GM12878 (cell line): ENCODE measurements at regions of chr18 and their contacts with region 1.

Region 1: GRCh38 chr18:50356036-50356945 is 18.6 kb upstream of the SKA1 start:
- DNase-seq: peak; percentile 79
- ATAC-seq: peak; percentile 93
- H3K4me3 ChIP-seq: no peak overlapping the region
- H3K27ac ChIP-seq: peak overlapping the region; percentile 86
- H3K4me1 ChIP-seq: peaks cover 15% of the 10 kb centered on the region
- H3K27me3 ChIP-seq: no peaks in the 10 kb centered on the region; a peak in 1 of 4 replicates
- CTCF ChIP-seq: peak; percentile 18 to 50 (median 41); a peak in 5 of 6 replicates
- EP300 ChIP-seq: peak; percentile 21 to 39; a peak in 2 of 4 replicates
- POLR2A ChIP-seq: no peak
- RAD21 ChIP-seq: peak; percentile 50

Region 2: GRCh38 chr18:50111265-50111792 is 245.0 kb before region 1 on chr18:
- CTCF ChIA-PET with region 1: interaction called, 9 read pairs
- POLR2A ChIA-PET with region 1: no interaction called
- RAD21 ChIA-PET with region 1: interaction called, 4 read pairs
- SMC1A ChIA-PET with region 1: interaction called, 4 read pairs
- in situ Hi-C with region 1: loop called (anchors 10 kb)
- intact Hi-C with region 1: no loop called
- DNase-seq: no peak
- ATAC-seq: peak; percentile 52; the same call in 2 of the 3 replicates
- H3K4me3 ChIP-seq: no peak overlapping the region
- H3K27ac ChIP-seq: no peak overlapping the region
- H3K4me1 ChIP-seq: no peaks in the 10 kb centered on the region
- H3K27me3 ChIP-seq: peaks cover 0 to 12% of the 10 kb centered on the region in 2 experiments; a peak in 2 of 4 replicates
- CTCF ChIP-seq: peak; percentile 7 to 52 (median 21); a peak in 4 of 6 replicates
- EP300 ChIP-seq: no peak
- POLR2A ChIP-seq: no peak
- RAD21 ChIP-seq: peak; percentile 63

Region 3: GRCh38 chr18:50218432-50219197 is 137.7 kb before region 1 on chr18:
- CTCF ChIA-PET with region 1: interaction called, 226 read pairs
- POLR2A ChIA-PET with region 1: interaction called, 8 read pairs
- RAD21 ChIA-PET with region 1: interaction called, 95 read pairs
- SMC1A ChIA-PET with region 1: interaction called, 130 read pairs
- in situ Hi-C with region 1: loop called (anchors 5 kb)
- intact Hi-C with region 1: loop called (anchors 1 kb)
- DNase-seq: peak; percentile 21
- ATAC-seq: peak; percentile 98
- H3K4me3 ChIP-seq: no peak overlapping the region
- H3K27ac ChIP-seq: no peak overlapping the region
- H3K4me1 ChIP-seq: peaks cover 5% of the 10 kb centered on the region
- H3K27me3 ChIP-seq: no peaks in the 10 kb centered on the region; a peak in 1 of 4 replicates
- CTCF ChIP-seq: peak; percentile 47 to 63 (median 50); a peak in 4 of 6 replicates
- EP300 ChIP-seq: no peak
- POLR2A ChIP-seq: no peak
- RAD21 ChIP-seq: peak; percentile 69

Region 4: GRCh38 chr18:50287441-50288347 is 68.6 kb before region 1 on chr18 and contains the start of gene CXXC1:
- CTCF ChIA-PET with region 1: interaction called, 39 read pairs
- POLR2A ChIA-PET with region 1: interaction called, 11 read pairs
- RAD21 ChIA-PET with region 1: interaction called, 49 read pairs
- SMC1A ChIA-PET with region 1: interaction called, 50 read pairs
- in situ Hi-C with region 1: loop called (anchors 10 kb)
- intact Hi-C with region 1: loop called (anchors 1 kb)
- DNase-seq: peak; percentile 99
- ATAC-seq: peak; percentile 97
- H3K4me3 ChIP-seq: peak within 1 kb of the TSS; percentile 97
- H3K27ac ChIP-seq: peak within 1 kb of the TSS; percentile 73
- H3K4me1 ChIP-seq: peaks cover 9% of the 10 kb centered on the region
- H3K27me3 ChIP-seq: no peaks in the 10 kb centered on the region
- CTCF ChIP-seq: peak; percentile 50 to 64 (median 51)
- EP300 ChIP-seq: no peak
- POLR2A ChIP-seq: no peak
- RAD21 ChIP-seq: peak; percentile 44; the same call in 1 of the 2 replicates
- polyA plus RNA-seq, gene CXXC1: 9.2 to 17.0 TPM

Region 5: GRCh38 chr18:50320719-50321118 is 35.6 kb before region 1 on chr18:
- CTCF ChIA-PET with region 1: interaction called, 83 read pairs
- POLR2A ChIA-PET with region 1: interaction called, 32 read pairs
- RAD21 ChIA-PET with region 1: interaction called, 125 read pairs
- SMC1A ChIA-PET with region 1: interaction called, 145 read pairs
- in situ Hi-C with region 1: no loop called
- intact Hi-C with region 1: loop called (anchors 1 kb)
- DNase-seq: peak; percentile 58
- ATAC-seq: peak; percentile 86
- H3K4me3 ChIP-seq: no peak overlapping the region
- H3K27ac ChIP-seq: peak overlapping the region; percentile 78
- H3K4me1 ChIP-seq: peaks cover 27% of the 10 kb centered on the region
- H3K27me3 ChIP-seq: no peaks in the 10 kb centered on the region
- CTCF ChIP-seq: no peak
- EP300 ChIP-seq: peak in 1 of 2 experiments; percentile 61; a peak in 1 of 4 replicates
- POLR2A ChIP-seq: no peak
- RAD21 ChIP-seq: no peak

Region 6: DNA sequence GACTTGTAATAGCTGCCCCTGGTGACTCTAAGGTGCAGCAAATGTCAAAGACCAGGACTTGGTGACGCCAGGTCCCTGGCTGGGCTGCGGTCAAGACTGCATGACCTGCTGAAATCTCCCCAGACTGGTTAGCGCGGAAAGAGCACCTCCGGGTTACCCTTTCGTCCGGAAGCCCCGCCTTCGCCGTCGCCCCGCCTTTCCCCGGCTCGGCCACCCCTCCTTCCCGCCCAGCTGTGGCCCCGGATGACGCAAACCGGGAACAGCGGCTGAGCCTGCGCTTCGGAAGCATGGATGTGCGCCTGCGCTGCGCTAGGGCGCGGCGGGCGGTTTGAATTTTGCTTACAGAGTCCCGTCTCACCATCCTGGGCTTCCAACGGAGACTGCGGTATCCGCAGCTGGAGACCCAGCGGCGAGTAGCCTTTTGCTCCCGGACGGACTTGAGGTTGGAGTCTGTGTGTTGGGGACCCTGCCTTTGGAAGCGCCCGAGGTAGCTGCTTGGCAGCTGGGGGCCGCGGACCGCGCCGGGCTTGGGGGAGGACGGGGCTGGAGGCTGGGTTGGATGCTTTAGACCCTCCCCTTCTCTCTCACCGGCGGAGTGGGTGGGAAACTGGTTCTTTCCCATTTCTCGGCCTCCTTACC is 18.6 kb after region 1 on chr18 and contains the start of gene SKA1:
- CTCF ChIA-PET with region 1: interaction called, 33 read pairs
- POLR2A ChIA-PET with region 1: interaction called, 4 read pairs
- RAD21 ChIA-PET with region 1: interaction called, 12 read pairs
- SMC1A ChIA-PET with region 1: interaction called, 35 read pairs
- in situ Hi-C with region 1: no loop called
- intact Hi-C with region 1: no loop called
- DNase-seq: peak; percentile 77
- ATAC-seq: peak; percentile 98
- H3K4me3 ChIP-seq: peak within 1 kb of the TSS; percentile 93
- H3K27ac ChIP-seq: peak within 1 kb of the TSS; percentile 82
- H3K4me1 ChIP-seq: peaks cover 7% of the 10 kb centered on the region
- H3K27me3 ChIP-seq: no peaks in the 10 kb centered on the region
- CTCF ChIP-seq: no peak
- EP300 ChIP-seq: peak in 1 of 2 experiments; percentile 26; a peak in 1 of 4 replicates
- POLR2A ChIP-seq: peak; percentile 91
- RAD21 ChIP-seq: no peak
- polyA plus RNA-seq, gene SKA1: 16.4 to 17.6 TPM

Region 7: GRCh38 chr18:50454387-50454988 is 98.2 kb after region 1 on chr18:
- CTCF ChIA-PET with region 1: no interaction called
- POLR2A ChIA-PET with region 1: no interaction called
- RAD21 ChIA-PET with region 1: no interaction called
- SMC1A ChIA-PET with region 1: no interaction called
- in situ Hi-C with region 1: no loop called
- intact Hi-C with region 1: no loop called
- DNase-seq: no peak
- ATAC-seq: no peak
- H3K4me3 ChIP-seq: no peak overlapping the region
- H3K27ac ChIP-seq: no peak overlapping the region
- H3K4me1 ChIP-seq: no peaks in the 10 kb centered on the region
- H3K27me3 ChIP-seq: no peaks in the 10 kb centered on the region; a peak in 1 of 4 replicates
- CTCF ChIP-seq: no peak
- EP300 ChIP-seq: no peak
- POLR2A ChIP-seq: no peak
- RAD21 ChIP-seq: no peak

Region 8: GRCh38 chr18:50475538-50476193 is 119.4 kb after region 1 on chr18:
- CTCF ChIA-PET with region 1: no interaction called
- POLR2A ChIA-PET with region 1: no interaction called
- RAD21 ChIA-PET with region 1: no interaction called
- SMC1A ChIA-PET with region 1: no interaction called
- in situ Hi-C with region 1: no loop called
- intact Hi-C with region 1: no loop called
- DNase-seq: no peak
- ATAC-seq: no peak
- H3K4me3 ChIP-seq: no peak overlapping the region
- H3K27ac ChIP-seq: no peak overlapping the region
- H3K4me1 ChIP-seq: no peaks in the 10 kb centered on the region
- H3K27me3 ChIP-seq: 0 out of 4 replicates have a peak, but pooled peaks cover 0 to 2% of the 10 kb centered on the region in 2 experiments
- CTCF ChIP-seq: no peak
- EP300 ChIP-seq: no peak
- POLR2A ChIP-seq: no peak
- RAD21 ChIP-seq: no peak

Region 9: GRCh38 chr18:50558157-50558556 is 201.9 kb after region 1 on chr18:
- CTCF ChIA-PET with region 1: no interaction called
- POLR2A ChIA-PET with region 1: no interaction called
- RAD21 ChIA-PET with region 1: no interaction called
- SMC1A ChIA-PET with region 1: no interaction called
- in situ Hi-C with region 1: no loop called
- intact Hi-C with region 1: no loop called
- DNase-seq: no peak
- ATAC-seq: no peak
- H3K4me3 ChIP-seq: no peak overlapping the region
- H3K27ac ChIP-seq: no peak overlapping the region
- H3K4me1 ChIP-seq: no peaks in the 10 kb centered on the region
- H3K27me3 ChIP-seq: peaks cover 13 to 15% of the 10 kb centered on the region in 2 experiments
- CTCF ChIP-seq: no peak
- EP300 ChIP-seq: no peak
- POLR2A ChIP-seq: no peak
- RAD21 ChIP-seq: no peak